ENCODE measurements at regions of chr3 and their contacts with region 1.

Region 1: GRCh38 chr3:149566292-149566975 is 91.4 kb downstream of the WWTR1 start:
- DNase-seq: no peak
- ATAC-seq: no peak
- H3K4me3 Mint-ChIP-seq: no peak overlapping the region
- H3K27ac Mint-ChIP-seq: no peak overlapping the region
- H3K4me1 Mint-ChIP-seq: peaks cover 2% of the 10 kb centered on the region
- H3K27me3 Mint-ChIP-seq: peaks cover 5% of the 10 kb centered on the region
- CTCF ChIP-seq: no peak

Region 2: GRCh38 chr3:149487598-149488197 is 78.7 kb before region 1 on chr3:
- CTCF ChIA-PET with region 1: no interaction called
- POLR2A ChIA-PET with region 1: no interaction called
- intact Hi-C with region 1: no loop called
- DNase-seq: peak; percentile 64
- ATAC-seq: peak; percentile 76
- H3K4me3 Mint-ChIP-seq: no peak overlapping the region
- H3K27ac Mint-ChIP-seq: no peak overlapping the region
- H3K4me1 Mint-ChIP-seq: no peaks in the 10 kb centered on the region
- H3K27me3 Mint-ChIP-seq: peaks cover 6% of the 10 kb centered on the region
- CTCF ChIP-seq: peak; percentile 63

Region 3: GRCh38 chr3:149581681-149582370 is 15.4 kb after region 1 on chr3:
- CTCF ChIA-PET with region 1: interaction called, 25 read pairs
- POLR2A ChIA-PET with region 1: no interaction called
- intact Hi-C with region 1: no loop called
- DNase-seq: no peak
- ATAC-seq: no peak
- H3K4me3 Mint-ChIP-seq: no peak overlapping the region
- H3K27ac Mint-ChIP-seq: no peak overlapping the region
- H3K4me1 Mint-ChIP-seq: peaks cover 17% of the 10 kb centered on the region
- H3K27me3 Mint-ChIP-seq: peaks cover 4% of the 10 kb centered on the region
- CTCF ChIP-seq: no peak

Region 4: DNA sequence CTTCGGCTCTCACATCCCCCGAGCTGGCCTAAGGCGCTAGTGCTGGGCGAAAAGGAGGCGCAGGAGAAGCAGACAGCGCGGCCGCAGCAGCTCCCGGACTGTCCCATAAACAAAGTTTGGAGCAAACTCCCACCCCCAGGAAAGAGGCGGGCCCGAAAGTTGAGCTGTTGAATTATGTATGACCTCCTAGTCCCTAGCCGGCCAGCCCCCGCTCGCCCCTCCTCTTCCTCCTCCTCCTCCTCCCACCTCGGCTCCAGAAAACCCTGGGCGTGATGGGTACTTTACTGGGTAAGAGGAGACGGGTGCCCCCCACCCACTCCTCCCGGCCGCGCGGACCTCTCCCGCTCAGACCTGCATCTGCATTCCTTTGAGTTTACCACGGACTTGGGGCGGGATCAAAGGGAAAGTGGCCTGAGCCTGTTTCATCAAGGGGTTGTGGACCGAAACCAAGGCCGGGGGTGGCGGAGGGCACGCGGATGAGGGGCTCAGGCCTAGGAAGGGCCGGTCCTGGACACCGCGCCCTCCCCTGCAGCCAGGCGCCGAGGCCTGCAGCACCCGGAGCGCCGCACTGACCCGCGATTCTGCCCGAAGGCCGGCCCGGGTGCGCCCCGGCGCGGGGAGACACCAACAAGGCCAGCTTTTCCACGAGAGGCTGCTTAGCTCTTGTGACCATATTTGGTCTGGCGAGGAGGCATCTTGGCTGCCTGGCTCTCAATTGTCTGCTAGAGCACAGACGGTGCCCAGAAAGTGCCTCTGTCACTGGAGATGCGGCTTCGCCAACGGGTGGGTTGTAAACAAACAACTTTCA is 91.7 kb after region 1 on chr3 and contains the start of gene WWTR1:
- CTCF ChIA-PET with region 1: interaction called, 11 read pairs
- POLR2A ChIA-PET with region 1: no interaction called
- intact Hi-C with region 1: no loop called
- DNase-seq: peak; percentile 49
- ATAC-seq: peak; percentile 68
- H3K4me3 Mint-ChIP-seq: peak within 1 kb of the TSS; percentile 74
- H3K27ac Mint-ChIP-seq: peak within 1 kb of the TSS; percentile 59
- H3K4me1 Mint-ChIP-seq: peaks cover 10% of the 10 kb centered on the region
- H3K27me3 Mint-ChIP-seq: peaks cover 53% of the 10 kb centered on the region
- CTCF ChIP-seq: no peak
- total RNA-seq, gene WWTR1: 0.40 to 0.63 TPM

Region 5: DNA sequence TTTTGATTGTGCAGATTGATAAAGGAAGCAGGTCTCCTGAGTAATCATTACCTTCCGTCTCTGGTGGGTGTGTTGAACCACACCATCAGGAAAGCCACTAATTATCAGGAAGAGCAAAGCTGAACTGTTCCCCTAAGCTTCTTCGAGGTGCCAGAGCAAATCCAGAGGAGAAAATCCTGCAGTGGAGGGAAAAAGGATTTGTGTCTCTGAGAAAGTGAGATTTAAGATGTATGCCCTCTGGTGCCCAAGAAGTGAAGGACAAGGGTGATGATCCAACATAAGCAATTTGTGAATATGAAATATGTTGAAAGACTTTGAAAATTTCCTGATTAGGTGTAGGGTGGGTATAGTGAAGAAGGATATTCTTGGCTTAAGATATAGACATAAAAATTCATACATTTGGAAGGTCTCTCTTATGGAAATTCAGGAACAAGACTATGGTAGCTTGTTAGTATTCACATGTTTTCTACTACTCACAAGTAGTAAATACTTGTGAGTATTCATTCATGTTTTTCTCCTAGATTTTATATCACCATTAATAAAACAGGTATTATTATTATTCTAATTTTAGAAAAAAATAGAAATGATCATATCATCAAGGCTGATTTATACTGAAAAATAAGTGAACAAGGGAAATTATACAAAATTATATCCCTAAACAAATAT is 151.1 kb after region 1 on chr3:
- CTCF ChIA-PET with region 1: interaction called, 27 read pairs
- POLR2A ChIA-PET with region 1: no interaction called
- intact Hi-C with region 1: no loop called
- DNase-seq: peak; percentile 58
- ATAC-seq: no peak
- H3K4me3 Mint-ChIP-seq: no peak overlapping the region
- H3K27ac Mint-ChIP-seq: no peak overlapping the region
- H3K4me1 Mint-ChIP-seq: no peaks in the 10 kb centered on the region
- H3K27me3 Mint-ChIP-seq: peaks cover 2% of the 10 kb centered on the region
- CTCF ChIP-seq: peak; percentile 60

Region 6: DNA sequence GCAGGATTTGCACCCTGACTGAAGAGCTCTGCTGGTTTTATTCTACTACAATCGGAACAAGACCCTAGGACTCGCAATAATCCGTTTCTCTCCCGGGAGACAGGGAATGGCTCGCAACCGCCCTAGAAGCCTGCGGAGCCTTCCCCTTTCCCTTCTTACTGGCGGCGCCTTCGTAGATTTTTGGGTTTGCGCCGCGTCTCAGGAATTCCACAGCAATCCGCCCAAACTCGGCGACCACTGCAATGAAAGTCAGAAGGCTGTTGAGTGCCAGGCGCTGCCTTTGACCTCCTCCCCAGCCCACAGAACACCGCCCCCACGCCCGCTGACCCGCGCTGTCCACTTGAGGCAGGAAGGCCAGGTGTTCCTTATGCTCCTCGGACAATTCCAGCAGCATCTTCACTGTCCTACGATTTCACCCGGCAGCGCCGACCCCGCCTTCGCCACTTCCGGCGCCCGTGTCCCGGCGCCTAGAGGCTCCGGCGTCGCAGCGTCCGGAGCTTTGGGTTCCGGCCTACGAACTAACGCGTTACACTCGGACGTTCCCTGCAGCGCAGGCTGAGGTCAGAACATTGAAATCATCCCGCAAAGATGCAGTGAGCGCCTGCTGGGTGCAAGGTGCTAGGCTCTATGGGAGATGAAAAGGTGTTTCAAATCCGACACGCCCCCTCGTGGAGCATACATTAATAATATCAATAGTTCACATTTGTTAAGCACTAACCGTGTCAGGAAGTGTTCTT is 185.8 kb after region 1 on chr3 and contains the start of gene COMMD2:
- CTCF ChIA-PET with region 1: interaction called, 18 read pairs
- POLR2A ChIA-PET with region 1: interaction called, 3 read pairs
- intact Hi-C with region 1: no loop called
- DNase-seq: peak; percentile 89
- ATAC-seq: peak; percentile 100
- H3K4me3 Mint-ChIP-seq: peak within 1 kb of the TSS; percentile 86
- H3K27ac Mint-ChIP-seq: peak within 1 kb of the TSS; percentile 93
- H3K4me1 Mint-ChIP-seq: peaks cover 21% of the 10 kb centered on the region
- H3K27me3 Mint-ChIP-seq: no peaks in the 10 kb centered on the region
- CTCF ChIP-seq: peak; percentile 50
- total RNA-seq, gene COMMD2: 31.0 to 31.8 TPM

Region 7: GRCh38 chr3:149771652-149772271 is 205.3 kb after region 1 on chr3:
- CTCF ChIA-PET with region 1: interaction called, 53 read pairs
- POLR2A ChIA-PET with region 1: no interaction called
- intact Hi-C with region 1: loop called (anchors 10 kb)
- DNase-seq: peak; percentile 62
- ATAC-seq: peak; percentile 61
- H3K4me3 Mint-ChIP-seq: no peak overlapping the region
- H3K27ac Mint-ChIP-seq: no peak overlapping the region
- H3K4me1 Mint-ChIP-seq: no peaks in the 10 kb centered on the region
- H3K27me3 Mint-ChIP-seq: peaks cover 9% of the 10 kb centered on the region
- CTCF ChIP-seq: peak; percentile 76

Measured in activated CD8-positive, alpha-beta T cell treated with anti-CD3 and anti-CD28 coated beads for 36 hours (primary cell).